MCF 10A (cell line): ENCODE measurements at regions of chr12 and their contacts with region 1.

Region 1: GRCh38 chr12:95805864-95806671 is 15.5 kb upstream of the NTN4 start:
- DNase-seq: peak; percentile 96
- H3K4me3 Mint-ChIP-seq: peak overlapping the region; percentile 0
- H3K27ac Mint-ChIP-seq: peak overlapping the region; percentile 83
- H3K4me1 Mint-ChIP-seq: peaks cover 38% of the 10 kb centered on the region
- H3K27me3 Mint-ChIP-seq: no peaks in the 10 kb centered on the region
- CTCF ChIP-seq: no peak

Region 2: DNA sequence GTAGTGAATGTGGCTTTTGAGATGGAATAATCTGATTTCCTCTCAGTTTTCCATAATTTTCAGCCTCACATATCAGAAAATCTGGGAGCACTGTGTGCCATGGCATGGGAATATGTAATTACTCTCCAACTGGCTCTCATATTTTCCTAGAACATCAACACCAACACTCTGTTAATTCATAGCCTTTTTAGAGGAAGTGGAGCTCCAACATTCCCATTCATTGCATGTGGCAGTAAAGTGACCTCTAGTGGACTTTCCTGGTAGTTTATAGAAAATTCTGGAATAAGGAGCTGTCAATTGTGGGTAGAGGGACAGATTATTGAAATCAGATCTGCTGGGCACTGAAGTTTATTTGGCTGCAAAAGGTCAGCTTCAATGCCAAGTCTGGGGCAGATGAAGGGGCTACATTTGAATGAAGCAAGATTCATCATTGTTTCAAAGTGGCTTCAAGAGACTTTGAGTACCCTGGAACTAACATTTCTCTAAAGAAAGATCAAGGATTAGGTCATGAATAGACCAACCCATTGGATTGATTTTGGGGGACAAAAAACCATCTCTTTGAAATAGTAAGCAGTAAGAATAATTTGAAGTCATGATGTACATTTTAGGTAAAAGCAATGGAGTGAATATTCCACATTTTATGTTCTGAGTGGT is 231.1 kb before region 1 on chr12:
- CTCF ChIA-PET with region 1: interaction called, 11 read pairs
- POLR2A ChIA-PET with region 1: interaction called, 3 read pairs
- intact Hi-C with region 1: no loop called
- DNase-seq: peak; percentile 60
- H3K4me3 Mint-ChIP-seq: no peak overlapping the region
- H3K27ac Mint-ChIP-seq: peak overlapping the region; percentile 23
- H3K4me1 Mint-ChIP-seq: no peaks in the 10 kb centered on the region
- H3K27me3 Mint-ChIP-seq: no peaks in the 10 kb centered on the region
- CTCF ChIP-seq: peak; percentile 64

Region 3: DNA sequence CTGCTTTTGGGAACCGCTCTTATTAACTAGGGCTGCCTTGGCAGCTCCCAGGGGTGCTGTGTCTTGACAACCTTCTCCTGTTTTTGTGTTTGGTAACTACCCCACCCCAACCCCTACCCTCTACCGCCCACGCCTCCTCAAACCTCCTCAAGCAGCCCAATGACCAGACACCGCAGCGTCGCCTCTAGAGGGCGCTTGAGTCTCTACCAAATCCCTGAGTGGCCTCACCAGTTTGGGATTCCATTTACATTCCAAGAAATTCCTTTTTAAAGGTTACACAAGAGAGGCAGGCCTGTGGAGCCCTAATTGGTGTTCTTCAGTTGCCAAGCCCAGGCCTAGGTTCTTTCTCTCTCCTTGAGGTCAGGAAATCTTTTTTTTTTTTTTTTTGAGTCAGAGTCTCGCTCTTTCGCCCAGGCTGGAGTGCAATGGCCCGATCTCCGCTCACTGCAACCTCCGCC is 182.5 kb before region 1 on chr12:
- CTCF ChIA-PET with region 1: interaction called, 7 read pairs
- POLR2A ChIA-PET with region 1: interaction called, 5 read pairs
- intact Hi-C with region 1: loop called (anchors 2 kb)
- DNase-seq: peak; percentile 90
- H3K4me3 Mint-ChIP-seq: no peak overlapping the region
- H3K27ac Mint-ChIP-seq: no peak overlapping the region
- H3K4me1 Mint-ChIP-seq: no peaks in the 10 kb centered on the region
- H3K27me3 Mint-ChIP-seq: no peaks in the 10 kb centered on the region
- CTCF ChIP-seq: peak; percentile 63

Region 4: GRCh38 chr12:95681210-95681765 is 124.8 kb before region 1 on chr12:
- CTCF ChIA-PET with region 1: no interaction called
- POLR2A ChIA-PET with region 1: no interaction called
- intact Hi-C with region 1: no loop called
- DNase-seq: no peak
- H3K4me3 Mint-ChIP-seq: no peak overlapping the region
- H3K27ac Mint-ChIP-seq: no peak overlapping the region
- H3K4me1 Mint-ChIP-seq: no peaks in the 10 kb centered on the region
- H3K27me3 Mint-ChIP-seq: no peaks in the 10 kb centered on the region
- CTCF ChIP-seq: no peak

Region 5: DNA sequence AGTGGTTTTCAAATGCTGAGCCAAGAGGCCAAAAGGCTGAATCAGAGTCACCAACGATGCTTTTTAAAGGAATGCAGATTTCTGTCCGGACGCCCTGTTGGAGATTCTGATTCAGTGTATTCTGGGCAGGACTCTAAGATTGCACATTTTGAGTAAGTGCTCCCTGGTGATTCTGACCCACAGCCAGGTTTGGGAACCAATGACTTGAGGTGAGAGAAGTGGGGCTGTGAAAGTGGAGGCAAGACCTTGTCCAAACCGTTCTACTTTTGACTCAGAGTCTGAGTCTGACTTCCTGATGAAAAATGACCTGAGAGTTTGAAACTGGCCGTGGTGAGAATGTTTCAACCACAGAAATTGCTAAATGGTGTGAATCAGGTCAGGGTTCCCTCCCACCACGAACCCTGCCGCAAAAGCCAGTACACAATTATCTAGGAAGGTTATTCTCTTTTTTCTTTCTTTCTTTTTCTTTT is 105.7 kb before region 1 on chr12:
- CTCF ChIA-PET with region 1: no interaction called
- POLR2A ChIA-PET with region 1: no interaction called
- intact Hi-C with region 1: loop called (anchors 2 kb)
- DNase-seq: peak; percentile 89
- H3K4me3 Mint-ChIP-seq: peak overlapping the region; percentile 48
- H3K27ac Mint-ChIP-seq: peak overlapping the region; percentile 92
- H3K4me1 Mint-ChIP-seq: peaks cover 14% of the 10 kb centered on the region
- H3K27me3 Mint-ChIP-seq: no peaks in the 10 kb centered on the region
- CTCF ChIP-seq: no peak

Region 6: DNA sequence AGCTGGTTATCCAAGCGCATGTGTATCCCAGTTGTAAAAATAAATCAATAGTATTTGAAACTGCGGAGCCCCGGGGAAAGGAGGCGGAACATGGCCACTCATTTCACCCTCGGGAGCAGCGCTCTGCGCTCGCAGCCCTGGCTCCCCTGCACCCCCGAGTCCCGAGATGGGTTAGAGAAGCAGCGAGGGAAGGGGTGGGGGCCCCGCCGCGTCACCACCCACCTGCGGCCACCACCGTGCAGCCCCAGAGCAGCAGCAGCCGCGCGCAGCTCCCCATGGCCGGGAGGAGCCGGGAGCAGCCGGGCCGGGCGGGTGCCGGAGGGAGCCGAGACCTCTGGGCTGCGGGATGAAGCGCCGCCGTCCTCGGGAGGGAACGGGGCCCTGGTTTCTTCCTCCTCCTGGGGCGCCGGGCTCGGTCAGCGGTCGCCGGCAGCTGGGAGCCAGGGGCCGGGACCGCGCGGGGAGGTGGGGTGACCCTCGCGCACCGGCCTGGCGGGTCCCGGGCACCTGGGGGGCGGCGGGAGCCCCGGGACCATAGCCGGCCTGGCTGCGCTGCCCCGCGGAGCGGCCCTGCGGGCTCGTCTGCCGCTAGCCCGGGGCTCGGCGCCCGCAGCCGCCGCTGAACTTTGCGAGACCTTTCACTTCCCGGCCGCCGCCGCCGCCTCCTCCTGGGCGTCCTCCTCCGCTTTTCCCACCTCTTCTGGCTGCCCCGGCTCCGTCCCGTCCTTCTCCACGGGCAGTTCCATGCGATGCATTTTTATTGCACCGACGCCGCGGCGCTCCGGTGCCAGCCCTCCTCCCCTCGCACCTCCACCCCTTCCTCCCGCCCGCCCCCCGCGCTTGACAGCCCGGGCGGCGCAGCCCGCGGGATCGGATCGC is 15.8 kb before region 1 on chr12 and contains the start of gene NTN4:
- CTCF ChIA-PET with region 1: interaction called, 6 read pairs
- POLR2A ChIA-PET with region 1: interaction called, 25 read pairs
- intact Hi-C with region 1: loop called (anchors 1 kb)
- DNase-seq: peak; percentile 49
- H3K4me3 Mint-ChIP-seq: peak within 1 kb of the TSS; percentile 80
- H3K27ac Mint-ChIP-seq: peak within 1 kb of the TSS; percentile 83
- H3K4me1 Mint-ChIP-seq: no peaks in the 10 kb centered on the region
- H3K27me3 Mint-ChIP-seq: no peaks in the 10 kb centered on the region
- CTCF ChIP-seq: no peak
- total RNA-seq, gene NTN4: 53.0 and 96.4 TPM in 2 replicates

Region 7: GRCh38 chr12:95829395-95829794 is 23.3 kb after region 1 on chr12:
- CTCF ChIA-PET with region 1: no interaction called
- POLR2A ChIA-PET with region 1: no interaction called
- intact Hi-C with region 1: no loop called
- DNase-seq: no peak
- H3K4me3 Mint-ChIP-seq: no peak overlapping the region
- H3K27ac Mint-ChIP-seq: no peak overlapping the region
- H3K4me1 Mint-ChIP-seq: no peaks in the 10 kb centered on the region
- H3K27me3 Mint-ChIP-seq: peaks cover 28% of the 10 kb centered on the region
- CTCF ChIP-seq: no peak